ENCODE measurements at regions of chr10 and their contacts with region 1.

Region 1: DNA sequence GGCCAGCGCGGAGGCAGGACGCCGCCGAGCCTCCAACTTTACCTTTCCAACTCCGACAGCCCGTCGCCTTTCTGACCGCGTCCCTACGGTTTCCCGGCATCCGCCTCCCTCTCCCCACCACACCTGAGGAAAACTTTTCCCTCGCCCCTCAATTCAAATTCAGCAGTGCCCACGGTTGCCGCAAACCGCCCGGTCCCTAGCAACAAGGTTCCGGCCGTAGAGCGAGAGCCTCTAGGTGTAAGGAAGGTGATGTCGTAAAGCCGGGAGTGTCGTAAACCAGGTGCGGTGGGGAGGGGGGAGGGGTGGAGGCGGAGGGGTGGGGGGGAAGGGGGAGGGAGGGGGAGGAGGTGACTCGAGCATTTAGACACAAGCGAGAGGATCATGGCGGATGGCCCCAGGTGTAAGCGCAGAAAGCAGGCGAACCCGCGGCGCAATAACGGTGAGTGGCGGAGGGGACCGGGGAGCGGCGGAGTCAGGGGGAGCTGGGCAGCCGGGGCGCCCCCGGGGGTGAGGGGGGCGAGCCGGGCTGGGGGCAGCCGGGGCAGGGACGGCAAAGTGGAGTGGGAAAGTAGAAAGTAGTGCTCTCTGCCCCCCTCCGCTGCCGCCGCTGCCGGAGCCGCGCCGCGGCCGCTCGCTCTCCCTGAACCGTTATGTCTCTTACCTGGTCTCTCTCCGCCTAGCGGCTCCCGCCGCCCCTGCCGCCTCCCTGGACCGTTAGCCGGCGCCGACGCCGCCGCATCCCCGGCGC is at the start of gene ZEB1:
- DNase-seq: peak; percentile 78 to 97 (median 88)
- ATAC-seq: peak; percentile 40
- H3K4me3 ChIP-seq: peak within 1 kb of the TSS; percentile 81
- H3K4me3 Mint-ChIP-seq: peak within 1 kb of the TSS; percentile 98
- H3K27ac ChIP-seq: peak within 1 kb of the TSS; percentile 80 to 98
- H3K27ac Mint-ChIP-seq: peak within 1 kb of the TSS; percentile 94
- H3K4me1 ChIP-seq: peaks cover 10% of the 10 kb centered on the region
- H3K4me1 Mint-ChIP-seq: peaks cover 45% of the 10 kb centered on the region
- H3K27me3 ChIP-seq: no peaks in the 10 kb centered on the region
- H3K27me3 Mint-ChIP-seq: no peaks in the 10 kb centered on the region
- CTCF ChIP-seq: peak; percentile 33
- total RNA-seq, gene ZEB1: 132 to 134 TPM

Region 2: GRCh38 chr10:31083765-31084184 is 235.3 kb before region 1 on chr10:
- CTCF ChIA-PET with region 1: no interaction called
- POLR2A ChIA-PET with region 1: no interaction called
- intact Hi-C with region 1: loop called in 1 of 2 experiments (anchors 10 kb)
- DNase-seq: peak; percentile 26 to 75 (median 33)
- ATAC-seq: peak; percentile 63
- H3K4me3 ChIP-seq: no peak overlapping the region
- H3K4me3 Mint-ChIP-seq: no peak overlapping the region
- H3K27ac ChIP-seq: no peak overlapping the region
- H3K27ac Mint-ChIP-seq: no peak overlapping the region
- H3K4me1 ChIP-seq: peaks cover 5% of the 10 kb centered on the region
- H3K4me1 Mint-ChIP-seq: peaks cover 4% of the 10 kb centered on the region
- H3K27me3 ChIP-seq: no peaks in the 10 kb centered on the region
- H3K27me3 Mint-ChIP-seq: no peaks in the 10 kb centered on the region
- CTCF ChIP-seq: peak; percentile 51

Region 3: GRCh38 chr10:31204090-31204489 is 114.9 kb before region 1 on chr10:
- CTCF ChIA-PET with region 1: no interaction called
- POLR2A ChIA-PET with region 1: no interaction called
- intact Hi-C with region 1: no loop called
- DNase-seq: no peak
- ATAC-seq: no peak
- H3K4me3 ChIP-seq: no peak overlapping the region
- H3K4me3 Mint-ChIP-seq: no peak overlapping the region
- H3K27ac ChIP-seq: no peak overlapping the region
- H3K27ac Mint-ChIP-seq: no peak overlapping the region
- H3K4me1 ChIP-seq: no peaks in the 10 kb centered on the region
- H3K4me1 Mint-ChIP-seq: no peaks in the 10 kb centered on the region
- H3K27me3 ChIP-seq: no peaks in the 10 kb centered on the region
- H3K27me3 Mint-ChIP-seq: no peaks in the 10 kb centered on the region
- CTCF ChIP-seq: no peak

Region 4: GRCh38 chr10:31347705-31348104 is 28.7 kb after region 1 on chr10:
- CTCF ChIA-PET with region 1: no interaction called
- POLR2A ChIA-PET with region 1: interaction called, 5 read pairs
- intact Hi-C with region 1: loop called (anchors 2 kb)
- DNase-seq: no peak
- ATAC-seq: no peak
- H3K4me3 ChIP-seq: no peak overlapping the region
- H3K4me3 Mint-ChIP-seq: peak overlapping the region; percentile 47
- H3K27ac ChIP-seq: no peak overlapping the region
- H3K27ac Mint-ChIP-seq: peak overlapping the region; percentile 25
- H3K4me1 ChIP-seq: peaks cover 10% of the 10 kb centered on the region
- H3K4me1 Mint-ChIP-seq: peaks cover 70% of the 10 kb centered on the region
- H3K27me3 ChIP-seq: no peaks in the 10 kb centered on the region
- H3K27me3 Mint-ChIP-seq: no peaks in the 10 kb centered on the region
- CTCF ChIP-seq: no peak

Region 5: DNA sequence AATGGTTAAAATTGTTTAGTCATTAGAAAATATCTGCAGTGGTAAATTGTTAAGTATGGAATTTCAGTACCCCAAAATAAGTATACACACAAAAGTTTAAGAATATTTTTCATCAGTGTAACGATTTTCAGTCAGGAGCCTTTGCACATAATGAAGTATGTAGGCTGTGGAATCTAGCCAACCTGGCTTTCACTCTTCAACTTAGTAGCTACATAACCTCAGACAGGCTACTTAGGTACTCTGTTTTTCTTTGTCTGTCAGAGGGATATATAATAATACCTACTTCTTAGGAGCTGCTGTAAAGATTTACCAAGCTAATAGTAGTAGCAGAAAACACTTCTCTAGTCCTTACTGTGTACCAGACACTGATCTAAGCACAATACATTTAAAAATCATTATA is 137.4 kb after region 1 on chr10:
- CTCF ChIA-PET with region 1: no interaction called
- POLR2A ChIA-PET with region 1: no interaction called
- intact Hi-C with region 1: no loop called
- DNase-seq: no peak
- ATAC-seq: no peak
- H3K4me3 ChIP-seq: no peak overlapping the region
- H3K4me3 Mint-ChIP-seq: no peak overlapping the region
- H3K27ac ChIP-seq: no peak overlapping the region
- H3K27ac Mint-ChIP-seq: no peak overlapping the region
- H3K4me1 ChIP-seq: no peaks in the 10 kb centered on the region
- H3K4me1 Mint-ChIP-seq: peaks cover 40% of the 10 kb centered on the region
- H3K27me3 ChIP-seq: no peaks in the 10 kb centered on the region
- H3K27me3 Mint-ChIP-seq: no peaks in the 10 kb centered on the region
- CTCF ChIP-seq: no peak

Region 6: GRCh38 chr10:31467796-31468535 is 148.9 kb after region 1 on chr10:
- CTCF ChIA-PET with region 1: no interaction called
- POLR2A ChIA-PET with region 1: no interaction called
- intact Hi-C with region 1: no loop called
- DNase-seq: peak in 2 of 14 experiments; percentile 8 to 11
- ATAC-seq: peak; percentile 39
- H3K4me3 ChIP-seq: no peak overlapping the region
- H3K4me3 Mint-ChIP-seq: no peak overlapping the region
- H3K27ac ChIP-seq: no peak overlapping the region
- H3K27ac Mint-ChIP-seq: no peak overlapping the region
- H3K4me1 ChIP-seq: no peaks in the 10 kb centered on the region
- H3K4me1 Mint-ChIP-seq: peaks cover 6% of the 10 kb centered on the region
- H3K27me3 ChIP-seq: no peaks in the 10 kb centered on the region
- H3K27me3 Mint-ChIP-seq: no peaks in the 10 kb centered on the region
- CTCF ChIP-seq: no peak

Region 7: DNA sequence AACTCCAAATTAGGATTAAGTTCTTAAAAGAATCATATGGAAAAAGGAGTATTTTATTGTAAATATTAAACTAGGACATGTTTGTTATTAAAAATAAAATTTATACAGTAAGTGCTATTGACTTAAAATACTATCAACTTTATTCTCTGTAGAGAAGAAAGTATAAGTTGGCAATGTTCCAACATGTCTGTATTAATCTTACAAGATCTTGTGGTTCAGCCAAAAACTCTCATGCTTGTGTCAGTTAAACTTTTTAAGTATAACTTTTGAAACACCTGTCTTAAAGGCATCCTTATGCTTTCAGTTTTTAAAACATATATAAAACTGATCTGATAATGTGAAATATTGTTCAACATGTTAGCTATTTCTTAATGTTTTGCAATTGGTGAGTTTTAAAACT is 160.7 kb after region 1 on chr10:
- CTCF ChIA-PET with region 1: no interaction called
- POLR2A ChIA-PET with region 1: interaction called, 5 read pairs
- intact Hi-C with region 1: loop called in 1 of 2 experiments (anchors 10 kb)
- DNase-seq: peak in 2 of 14 experiments; percentile 22 to 25
- ATAC-seq: peak; percentile 51
- H3K4me3 ChIP-seq: no peak overlapping the region
- H3K4me3 Mint-ChIP-seq: no peak overlapping the region
- H3K27ac ChIP-seq: no peak overlapping the region
- H3K27ac Mint-ChIP-seq: no peak overlapping the region
- H3K4me1 ChIP-seq: no peaks in the 10 kb centered on the region
- H3K4me1 Mint-ChIP-seq: peaks cover 40% of the 10 kb centered on the region
- H3K27me3 ChIP-seq: no peaks in the 10 kb centered on the region
- H3K27me3 Mint-ChIP-seq: no peaks in the 10 kb centered on the region
- CTCF ChIP-seq: no peak

Region 8: DNA sequence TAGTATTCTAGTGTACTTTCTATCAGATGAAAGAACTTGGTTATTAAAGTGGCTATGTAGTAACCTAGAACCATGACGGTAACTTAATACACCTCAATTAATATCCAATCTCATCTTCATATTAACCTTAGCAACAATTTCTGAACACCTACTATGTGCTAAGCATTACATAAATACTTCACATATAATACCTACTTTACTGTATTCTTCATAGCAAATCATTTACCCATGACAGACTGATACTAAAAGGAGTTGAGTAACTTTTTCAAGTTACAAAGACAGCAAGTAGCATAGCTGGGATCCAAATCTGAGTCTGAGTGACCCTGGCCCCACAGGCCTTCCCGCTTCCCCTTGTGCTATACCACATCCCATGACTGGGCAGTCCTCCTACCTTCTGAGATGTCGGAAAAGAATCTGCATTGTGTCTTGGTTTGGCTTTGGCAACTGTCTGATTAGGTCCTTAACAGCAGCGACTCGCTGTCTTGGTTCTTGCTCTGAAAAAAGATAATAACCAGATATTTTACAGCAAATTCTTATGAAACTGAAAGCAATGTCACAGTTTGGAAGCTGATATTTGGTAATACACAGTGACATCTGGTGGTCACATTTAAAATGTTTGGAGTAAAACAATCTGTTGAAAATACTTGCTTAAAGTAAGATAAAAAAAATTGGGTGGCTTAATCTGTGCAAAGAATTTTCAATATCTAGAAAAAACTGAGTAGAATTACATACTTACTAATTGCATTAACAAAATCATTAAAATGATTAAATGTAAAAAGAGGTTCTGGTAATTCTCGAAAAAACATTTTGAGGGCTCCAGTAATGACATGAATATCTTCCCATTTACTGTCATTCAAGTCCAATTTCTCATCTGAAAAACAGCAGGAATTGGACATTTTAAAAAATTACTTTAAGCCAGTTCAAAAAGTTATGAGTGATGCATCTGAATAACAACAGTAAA is 489.5 kb after region 1 on chr10:
- CTCF ChIA-PET with region 1: no interaction called
- POLR2A ChIA-PET with region 1: no interaction called
- intact Hi-C with region 1: loop called in 1 of 2 experiments (anchors 1 kb)
- DNase-seq: peak in 4 of 14 experiments; percentile 3 to 75 (median 70)
- ATAC-seq: peak; percentile 68
- H3K4me3 ChIP-seq: no peak overlapping the region
- H3K4me3 Mint-ChIP-seq: no peak overlapping the region
- H3K27ac ChIP-seq: no peak overlapping the region
- H3K27ac Mint-ChIP-seq: peak overlapping the region; percentile 50
- H3K4me1 ChIP-seq: peaks cover 3% of the 10 kb centered on the region
- H3K4me1 Mint-ChIP-seq: peaks cover 14% of the 10 kb centered on the region
- H3K27me3 ChIP-seq: no peaks in the 10 kb centered on the region
- H3K27me3 Mint-ChIP-seq: no peaks in the 10 kb centered on the region
- CTCF ChIP-seq: peak; percentile 73